A673 (cell line): ENCODE measurements at regions of chr3 and their contacts with region 1.

Region 1: DNA sequence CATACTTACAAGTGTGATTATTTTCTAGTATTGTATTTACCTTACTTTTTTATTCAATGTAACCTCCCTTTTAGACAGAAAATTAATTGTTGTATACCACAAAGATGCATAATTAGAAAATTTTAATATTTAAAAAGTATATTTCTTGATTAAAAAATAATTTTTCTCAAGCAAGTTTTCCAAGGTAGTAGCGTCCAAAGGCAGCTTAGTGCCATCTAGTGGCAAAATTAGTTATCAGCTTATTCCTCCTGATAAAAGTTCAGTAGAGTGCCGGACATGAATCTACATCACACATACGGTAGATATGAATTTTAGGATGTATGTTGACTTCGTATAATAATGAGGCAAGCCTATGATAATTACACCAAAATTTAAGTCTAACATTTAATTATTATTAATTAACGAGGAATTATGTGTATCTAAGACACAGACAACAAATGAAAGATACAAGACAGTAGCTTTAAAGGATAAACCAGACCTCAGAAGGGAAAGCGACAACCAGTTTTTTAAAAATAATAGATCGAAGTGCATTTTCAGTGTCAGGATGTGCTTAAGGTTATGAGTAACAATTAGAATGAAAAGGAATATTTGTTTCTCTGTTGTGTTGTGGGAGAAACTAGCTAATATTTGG is 405.9 kb downstream of the ROBO1 start:
- DNase-seq: peak; percentile 58
- H3K4me3 ChIP-seq: no peak overlapping the region
- H3K27ac ChIP-seq: no peak overlapping the region
- H3K4me1 ChIP-seq: peaks cover 4% of the 10 kb centered on the region
- H3K27me3 ChIP-seq: no peaks in the 10 kb centered on the region
- CTCF ChIP-seq: peak; percentile 81

Region 2: GRCh38 chr3:79086514-79086913 is 275.3 kb before region 1 on chr3:
- CTCF ChIA-PET with region 1: interaction called, 31 read pairs
- POLR2A ChIA-PET with region 1: no interaction called
- intact Hi-C with region 1: loop called (anchors 2 kb)
- DNase-seq: peak; percentile 72
- H3K4me3 ChIP-seq: no peak overlapping the region
- H3K27ac ChIP-seq: no peak overlapping the region
- H3K4me1 ChIP-seq: no peaks in the 10 kb centered on the region
- H3K27me3 ChIP-seq: peaks cover 6% of the 10 kb centered on the region
- CTCF ChIP-seq: peak; percentile 88

Region 3: GRCh38 chr3:79418855-79419621 is 57.2 kb after region 1 on chr3:
- CTCF ChIA-PET with region 1: no interaction called
- POLR2A ChIA-PET with region 1: no interaction called
- intact Hi-C with region 1: no loop called
- DNase-seq: no peak
- H3K4me3 ChIP-seq: no peak overlapping the region
- H3K27ac ChIP-seq: no peak overlapping the region
- H3K4me1 ChIP-seq: no peaks in the 10 kb centered on the region
- H3K27me3 ChIP-seq: no peaks in the 10 kb centered on the region
- CTCF ChIP-seq: no peak

Region 4: GRCh38 chr3:79497447-79498111 is 135.7 kb after region 1 on chr3:
- CTCF ChIA-PET with region 1: no interaction called
- POLR2A ChIA-PET with region 1: no interaction called
- intact Hi-C with region 1: loop called (anchors 10 kb)
- DNase-seq: peak; percentile 28
- H3K4me3 ChIP-seq: no peak overlapping the region
- H3K27ac ChIP-seq: no peak overlapping the region
- H3K4me1 ChIP-seq: no peaks in the 10 kb centered on the region
- H3K27me3 ChIP-seq: no peaks in the 10 kb centered on the region
- CTCF ChIP-seq: peak; percentile 81